ENCODE measurements at regions of chr18 and their contacts with region 1.

Region 1: DNA sequence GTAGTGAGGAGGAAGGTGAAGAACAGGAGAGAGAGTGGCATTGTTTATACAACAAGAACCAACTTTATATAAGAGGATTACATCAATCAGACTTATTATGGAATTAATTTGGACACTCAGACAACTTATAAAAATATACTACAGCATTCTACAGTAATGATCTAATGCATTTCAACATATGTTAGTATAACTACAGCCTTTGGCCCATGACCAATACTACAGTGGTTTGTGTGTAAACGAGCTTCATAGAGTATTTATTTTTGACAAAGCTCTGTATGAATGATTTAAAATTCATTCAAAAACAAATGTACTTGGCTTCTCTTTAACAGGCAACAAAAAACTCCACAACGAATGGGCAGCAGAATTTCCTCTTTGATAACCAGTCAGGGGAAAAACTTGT is 72.8 kb downstream of the ZNF521 start:
- DNase-seq: no peak
- H3K4me3 ChIP-seq: no peak overlapping the region
- H3K27ac ChIP-seq: no peak overlapping the region
- H3K4me1 ChIP-seq: no peaks in the 10 kb centered on the region
- H3K27me3 ChIP-seq: no peaks in the 10 kb centered on the region
- CTCF ChIP-seq: no peak

Region 2: DNA sequence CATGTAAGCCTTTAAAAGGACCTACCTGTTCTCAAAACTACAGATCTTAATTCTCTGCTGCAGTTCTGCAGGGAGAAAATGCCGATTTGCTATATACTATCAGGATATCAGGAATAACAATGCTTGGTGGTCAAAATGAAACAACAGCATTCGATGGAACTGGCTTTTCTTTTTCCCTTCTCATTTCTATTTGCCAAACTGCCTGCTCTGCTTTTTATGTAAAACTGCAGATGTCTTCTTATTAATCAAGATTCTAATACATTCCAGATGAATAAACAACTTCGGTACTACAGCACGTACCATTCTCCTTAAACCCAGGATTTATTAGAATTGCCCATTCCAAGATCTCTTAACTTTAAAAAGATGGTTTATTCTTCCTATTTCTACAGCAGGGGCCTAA is 28.1 kb before region 1 on chr18:
- CTCF ChIA-PET with region 1: no interaction called
- POLR2A ChIA-PET with region 1: no interaction called
- intact Hi-C with region 1: loop called (anchors 2 kb)
- DNase-seq: no peak
- H3K4me3 ChIP-seq: no peak overlapping the region
- H3K27ac ChIP-seq: no peak overlapping the region
- H3K4me1 ChIP-seq: no peaks in the 10 kb centered on the region
- H3K27me3 ChIP-seq: peaks cover 3% of the 10 kb centered on the region
- CTCF ChIP-seq: no peak

Measured in A673 (cell line).